Activated CD4-positive, alpha-beta T cell treated with anti-CD3 and anti-CD28 coated beads for 36 hours (primary cell): ENCODE measurements at regions of chr19 and their contacts with region 1.

Region 1: GRCh38 chr19:12736995-12737834 is at the start of gene GET3:
- DNase-seq: peak; percentile 89
- ATAC-seq: peak; percentile 88
- H3K4me3 Mint-ChIP-seq: peak within 1 kb of the TSS; percentile 98
- H3K27ac Mint-ChIP-seq: peak within 1 kb of the TSS; percentile 94
- H3K4me1 Mint-ChIP-seq: peaks cover 32% of the 10 kb centered on the region
- H3K27me3 Mint-ChIP-seq: no peaks in the 10 kb centered on the region
- total RNA-seq, gene GET3: 53.7 to 61.9 TPM

Region 2: DNA sequence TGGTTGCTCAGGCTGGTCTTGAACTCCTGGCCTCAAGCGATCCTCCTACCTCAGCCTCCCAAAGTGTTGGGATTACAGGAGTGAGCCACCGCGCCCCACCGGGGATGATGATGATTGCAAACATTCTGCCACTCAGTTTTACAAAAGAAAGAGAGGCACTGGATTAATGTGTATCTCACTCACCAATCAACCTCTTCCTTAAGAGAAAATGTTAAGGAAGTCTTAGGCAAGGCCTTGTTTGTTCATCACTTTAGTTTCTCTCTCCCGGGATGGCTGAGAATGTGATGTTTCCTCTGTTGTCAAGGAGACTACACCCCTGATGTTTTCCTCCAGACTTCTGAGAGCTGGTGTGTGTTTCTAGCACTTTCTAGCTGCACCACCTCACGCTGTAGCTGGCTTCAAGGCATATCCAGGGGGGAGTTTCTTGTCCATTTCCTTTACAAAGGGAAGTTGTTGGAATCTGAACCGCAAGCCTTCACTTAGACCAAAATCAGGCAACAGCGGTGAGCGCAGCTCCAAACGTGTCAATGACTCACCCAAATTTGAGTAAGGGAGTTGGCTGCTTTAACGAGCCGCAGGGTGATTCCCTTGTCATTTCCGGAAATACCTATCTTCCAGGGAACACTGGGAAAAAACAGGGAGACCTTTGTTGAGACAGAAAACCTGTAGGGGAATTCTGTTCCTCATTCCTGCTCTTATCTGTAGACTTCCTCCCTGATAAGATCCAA is 1645.6 kb before region 1 on chr19:
- CTCF ChIA-PET with region 1: no interaction called
- POLR2A ChIA-PET with region 1: no interaction called
- intact Hi-C with region 1: no loop called
- DNase-seq: peak; percentile 68
- ATAC-seq: no peak
- H3K4me3 Mint-ChIP-seq: peak overlapping the region; percentile 93
- H3K27ac Mint-ChIP-seq: peak overlapping the region; percentile 84
- H3K4me1 Mint-ChIP-seq: peaks cover 62% of the 10 kb centered on the region
- H3K27me3 Mint-ChIP-seq: no peaks in the 10 kb centered on the region

Region 3: DNA sequence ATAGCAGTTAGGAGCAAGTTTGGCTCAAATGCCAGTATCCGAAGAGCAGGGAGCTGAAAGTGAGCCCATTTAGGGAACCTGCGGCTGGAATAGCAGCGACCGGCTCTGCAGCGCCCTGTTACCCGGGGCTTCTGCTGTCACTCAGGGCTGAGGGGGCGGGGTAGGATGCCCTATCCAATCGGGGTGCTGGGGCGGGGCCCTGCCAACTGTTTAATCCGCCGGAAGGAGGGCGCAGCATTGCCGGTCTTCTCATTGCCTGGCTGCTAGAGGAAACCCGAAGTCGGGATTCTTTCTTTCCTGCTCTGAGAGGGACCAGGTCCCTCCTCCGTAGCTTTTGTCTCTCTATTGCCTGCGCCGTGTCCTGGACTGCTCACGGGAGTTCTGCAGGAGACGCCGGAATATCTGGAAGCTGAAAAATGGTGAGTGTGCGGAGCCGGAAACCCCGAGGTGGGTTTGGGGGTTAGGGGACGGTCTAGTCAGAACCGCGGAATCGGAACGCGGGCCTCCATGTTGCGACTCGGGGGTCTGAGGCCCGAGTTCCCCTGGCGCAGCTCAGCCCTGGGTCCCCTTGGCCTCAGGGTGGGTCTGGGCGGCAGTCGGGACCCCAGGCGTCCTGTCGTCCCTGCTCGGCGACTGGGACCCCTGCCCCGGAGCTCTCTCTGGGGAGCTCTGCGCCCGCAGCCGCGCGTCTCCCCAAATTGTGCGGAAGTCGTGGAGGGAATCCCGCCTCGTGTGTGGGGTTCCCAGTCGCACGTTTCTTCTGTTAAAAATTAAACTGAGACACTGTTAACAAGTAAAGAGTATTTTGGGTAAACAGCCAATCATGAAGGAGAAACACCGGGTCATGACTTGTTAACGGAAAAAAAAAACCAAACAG is 749.6 kb before region 1 on chr19:
- CTCF ChIA-PET with region 1: no interaction called
- POLR2A ChIA-PET with region 1: no interaction called
- intact Hi-C with region 1: loop called in 1 of 2 experiments (anchors 5 kb)
- DNase-seq: peak; percentile 98
- ATAC-seq: peak; percentile 98
- H3K4me3 Mint-ChIP-seq: peak overlapping the region; percentile 86
- H3K27ac Mint-ChIP-seq: peak overlapping the region; percentile 92
- H3K4me1 Mint-ChIP-seq: peaks cover 18% of the 10 kb centered on the region
- H3K27me3 Mint-ChIP-seq: no peaks in the 10 kb centered on the region

Region 4: DNA sequence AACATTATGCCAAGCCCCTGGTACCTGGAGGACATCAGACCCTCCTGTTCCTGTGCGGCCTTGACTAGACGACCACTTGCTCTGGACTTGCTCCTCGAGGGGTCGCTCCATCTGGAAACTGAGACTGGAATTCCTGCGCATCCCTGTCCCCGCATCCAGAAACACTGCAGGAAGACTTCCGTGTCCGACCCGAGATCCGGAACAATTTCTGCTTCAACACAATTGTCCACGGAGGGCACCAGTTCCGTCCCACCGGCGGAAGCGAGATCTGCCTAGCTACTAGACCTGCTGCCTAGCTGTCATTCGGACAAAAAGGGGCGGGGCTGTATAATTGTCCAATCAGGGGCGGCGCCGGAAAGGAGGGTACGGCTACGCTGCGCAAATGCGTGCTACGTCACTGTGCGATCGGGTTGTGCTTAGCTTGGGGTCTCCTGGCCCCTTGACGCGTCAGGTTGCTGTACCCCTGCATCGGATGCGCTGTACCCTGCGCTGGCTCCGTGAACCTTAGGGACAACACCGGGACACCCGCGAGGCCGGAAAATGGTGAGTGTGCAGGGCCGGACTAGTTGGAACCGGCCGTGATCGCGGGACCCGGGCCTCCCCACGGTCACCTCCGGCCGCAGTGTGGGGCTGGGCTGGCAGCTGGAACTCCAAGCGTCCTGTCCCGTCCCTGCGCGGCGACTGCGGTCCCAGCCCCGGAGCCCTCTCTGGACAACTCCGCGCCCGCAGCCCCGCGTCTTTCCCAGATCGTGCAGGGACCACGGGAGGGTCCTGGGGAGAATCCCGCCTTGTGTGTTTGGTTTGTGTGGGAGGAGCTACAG is 126.5 kb before region 1 on chr19 and contains the starts of genes ZNF490 and ZNF791:
- CTCF ChIA-PET with region 1: no interaction called
- POLR2A ChIA-PET with region 1: interaction called, 4 read pairs
- intact Hi-C with region 1: loop called in 1 of 2 experiments (anchors 1 kb)
- DNase-seq: peak; percentile 98
- ATAC-seq: peak; percentile 91
- H3K4me3 Mint-ChIP-seq: peak within 1 kb of the TSS; percentile 94
- H3K27ac Mint-ChIP-seq: peak within 1 kb of the TSS; percentile 99
- H3K4me1 Mint-ChIP-seq: peaks cover 31% of the 10 kb centered on the region
- H3K27me3 Mint-ChIP-seq: no peaks in the 10 kb centered on the region
- total RNA-seq, gene ZNF490: 7.7 to 8.7 TPM
- total RNA-seq, gene ZNF791: 16.1 to 18.1 TPM

Region 5: DNA sequence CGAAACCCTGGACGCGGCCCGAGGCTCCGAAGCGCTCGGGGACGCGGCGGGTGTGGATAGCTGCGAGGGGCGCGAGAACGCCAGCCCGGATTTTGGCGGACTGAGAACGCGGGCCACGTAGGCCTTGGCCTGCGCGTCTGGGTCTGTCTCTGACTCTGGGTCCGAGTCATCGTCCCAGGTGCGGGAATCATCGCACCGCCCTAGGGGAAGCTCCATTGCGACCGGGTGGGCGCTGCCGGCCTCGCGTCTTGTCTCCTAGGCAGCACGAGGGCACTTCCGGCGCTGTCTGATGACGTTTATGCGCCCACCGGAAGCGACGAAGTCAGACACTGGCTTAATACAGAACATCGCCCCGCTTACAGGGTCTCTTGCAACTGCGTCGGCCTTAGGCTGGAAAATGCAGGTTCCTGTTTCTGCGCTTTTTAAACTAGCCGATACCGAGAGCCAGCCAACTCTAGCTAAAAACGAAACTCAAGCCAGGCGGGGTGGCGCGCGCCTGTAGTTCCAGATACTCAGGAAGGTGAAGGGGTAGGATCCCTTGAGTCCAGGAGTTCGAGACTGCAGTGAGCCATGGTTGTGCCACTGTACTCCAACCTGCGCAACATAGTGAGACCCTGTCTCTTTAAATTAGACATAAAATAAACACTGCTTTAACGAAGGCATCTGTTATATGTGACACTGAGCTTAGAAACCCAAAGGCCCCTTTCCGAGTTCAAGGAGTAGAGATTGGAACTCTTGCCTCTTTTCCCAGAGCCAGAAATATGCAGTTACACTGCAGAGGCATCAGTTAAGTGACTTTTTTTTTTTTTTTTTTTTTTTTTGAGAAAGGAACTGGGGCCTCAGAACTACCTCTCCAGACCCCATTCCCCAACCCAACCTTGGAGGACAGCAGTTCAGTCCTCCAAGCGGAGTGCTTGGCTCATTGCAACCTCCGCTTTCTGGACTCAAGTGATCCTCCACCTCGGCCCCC is 40.6 kb before region 1 on chr19 and contains the start of gene FBXW9:
- CTCF ChIA-PET with region 1: interaction called, 4 read pairs
- POLR2A ChIA-PET with region 1: no interaction called
- intact Hi-C with region 1: loop called in 1 of 2 experiments (anchors 1 kb)
- DNase-seq: peak; percentile 98
- ATAC-seq: peak; percentile 91
- H3K4me3 Mint-ChIP-seq: peak within 1 kb of the TSS; percentile 75
- H3K27ac Mint-ChIP-seq: peak within 1 kb of the TSS; percentile 94
- H3K4me1 Mint-ChIP-seq: peaks cover 11% of the 10 kb centered on the region
- H3K27me3 Mint-ChIP-seq: no peaks in the 10 kb centered on the region
- total RNA-seq, gene FBXW9: 8.3 to 8.8 TPM

Region 6: DNA sequence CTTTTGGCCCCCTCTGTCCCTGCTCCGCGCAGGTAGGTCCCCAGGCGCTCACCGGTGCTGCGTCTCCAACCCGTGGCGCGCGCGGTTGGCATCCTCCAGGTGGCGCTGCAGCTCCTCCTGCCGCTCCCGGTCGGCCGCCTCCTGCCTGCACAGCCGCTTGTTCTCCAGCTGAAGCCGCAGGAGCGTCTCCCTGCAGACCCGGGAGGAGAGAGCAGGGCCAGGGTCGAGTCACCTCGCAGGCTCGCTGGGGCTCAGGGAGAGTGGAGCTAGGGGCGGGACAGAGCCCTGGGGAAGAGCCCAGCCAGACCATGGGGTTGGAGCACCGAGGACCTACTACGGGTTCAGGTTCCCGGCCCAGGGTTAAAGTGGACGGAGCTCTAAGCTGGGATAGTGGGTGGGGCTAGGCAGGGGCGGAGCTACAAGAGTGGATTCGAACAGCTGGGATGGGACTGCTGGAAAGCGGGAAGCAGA is 28.9 kb after region 1 on chr19:
- CTCF ChIA-PET with region 1: interaction called, 12 read pairs
- POLR2A ChIA-PET with region 1: no interaction called
- intact Hi-C with region 1: no loop called
- DNase-seq: peak; percentile 94
- ATAC-seq: peak; percentile 83
- H3K4me3 Mint-ChIP-seq: peak overlapping the region; percentile 17
- H3K27ac Mint-ChIP-seq: no peak overlapping the region
- H3K4me1 Mint-ChIP-seq: peaks cover 10% of the 10 kb centered on the region
- H3K27me3 Mint-ChIP-seq: no peaks in the 10 kb centered on the region

Region 7: DNA sequence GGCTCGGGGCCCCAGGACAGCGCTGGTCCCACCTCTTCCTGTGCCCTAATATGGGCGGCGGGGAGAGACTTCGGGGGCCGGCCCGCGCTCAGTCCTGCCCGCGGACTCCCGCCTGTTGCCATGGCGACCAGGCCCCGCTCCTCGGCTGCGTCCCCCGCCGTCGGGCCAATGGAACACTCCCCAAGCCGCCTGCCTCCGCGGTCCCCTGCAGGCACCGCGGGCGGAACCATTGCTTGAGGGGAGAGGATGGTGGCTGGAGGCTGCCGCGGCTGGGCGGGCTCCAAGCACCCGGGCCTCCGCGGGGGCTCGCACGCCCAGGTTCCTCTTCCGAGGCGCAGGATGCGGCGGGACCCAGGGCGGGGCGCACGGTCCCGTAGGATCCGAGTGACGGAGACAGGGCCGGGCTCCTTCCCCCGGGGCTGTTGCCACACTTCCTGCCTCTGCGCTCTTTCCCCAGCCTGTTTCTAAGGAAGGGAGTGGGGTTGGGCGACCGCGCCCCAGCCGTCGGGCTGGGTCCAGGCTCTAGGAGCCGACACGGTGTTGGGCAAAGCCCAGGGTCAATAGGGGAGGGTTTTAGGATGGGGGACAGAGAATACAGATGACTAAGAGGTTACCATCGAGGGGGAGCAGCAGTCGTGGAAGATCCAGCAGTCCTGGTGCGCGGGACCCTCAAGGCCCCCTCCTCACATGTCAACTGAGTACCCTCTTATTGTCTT is 52.8 kb after region 1 on chr19:
- CTCF ChIA-PET with region 1: interaction called, 4 read pairs
- POLR2A ChIA-PET with region 1: interaction called, 9 read pairs
- intact Hi-C with region 1: loop called (anchors 1 to 5 kb)
- DNase-seq: peak; percentile 99
- ATAC-seq: peak; percentile 48
- H3K4me3 Mint-ChIP-seq: peak overlapping the region; percentile 92
- H3K27ac Mint-ChIP-seq: peak overlapping the region; percentile 98
- H3K4me1 Mint-ChIP-seq: peaks cover 28% of the 10 kb centered on the region
- H3K27me3 Mint-ChIP-seq: no peaks in the 10 kb centered on the region

Region 8: GRCh38 chr19:12890787-12891552 is 153.8 kb after region 1 on chr19 and contains the start of gene GCDH:
- CTCF ChIA-PET with region 1: no interaction called
- POLR2A ChIA-PET with region 1: no interaction called
- intact Hi-C with region 1: loop called in 1 of 2 experiments (anchors 1 kb)
- DNase-seq: peak; percentile 98
- ATAC-seq: peak; percentile 98
- H3K4me3 Mint-ChIP-seq: peak within 1 kb of the TSS; percentile 100
- H3K27ac Mint-ChIP-seq: peak within 1 kb of the TSS; percentile 90
- H3K4me1 Mint-ChIP-seq: peaks cover 18% of the 10 kb centered on the region
- H3K27me3 Mint-ChIP-seq: no peaks in the 10 kb centered on the region
- total RNA-seq, gene GCDH: 36.2 to 41.1 TPM